ENCODE measurements at regions of chr7 and their contacts with region 1.

Region 1: DNA sequence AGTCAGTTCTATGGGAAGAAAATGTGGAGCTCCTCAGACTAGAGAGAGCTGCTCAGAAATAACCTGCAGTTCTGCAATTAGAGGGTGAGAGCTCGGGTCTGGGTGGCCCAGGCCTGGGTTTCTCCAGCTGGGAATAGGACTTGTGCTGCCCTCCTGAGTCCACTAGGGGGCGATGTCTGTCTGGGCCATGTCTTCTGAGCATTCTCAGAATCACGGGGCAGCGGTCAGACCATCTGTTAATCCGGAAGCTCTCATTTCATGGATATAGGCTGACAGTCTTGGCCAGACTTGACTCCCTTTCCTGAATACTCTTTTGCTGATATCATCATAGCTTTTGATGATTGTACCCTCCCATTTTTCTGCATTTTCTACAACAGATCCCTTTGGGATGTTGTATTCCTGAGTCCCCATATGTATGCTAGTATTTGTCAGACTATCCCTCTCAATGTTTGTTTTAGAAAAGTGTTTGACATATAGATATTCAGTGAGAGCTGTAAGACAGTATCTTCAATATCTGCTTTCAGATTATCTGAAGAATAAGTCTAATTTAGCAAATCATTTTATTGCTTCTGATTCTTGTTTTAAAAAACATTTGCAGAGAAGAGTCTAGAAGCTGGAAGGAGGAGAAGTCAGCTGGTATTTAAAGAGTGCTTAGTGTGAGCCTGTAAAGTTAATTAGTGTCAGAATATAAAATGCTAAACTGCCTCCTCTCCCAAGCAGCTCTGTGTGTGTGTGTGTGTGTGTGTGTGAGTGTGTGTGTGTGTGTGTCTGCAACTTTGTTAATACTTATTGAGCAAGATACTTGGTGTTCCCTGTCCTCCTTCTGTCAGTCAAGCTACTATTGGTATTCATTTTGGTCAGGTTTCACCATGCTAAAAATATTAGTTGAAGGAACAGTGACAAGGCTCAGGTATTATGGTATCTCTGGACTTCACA is 38.0 kb downstream of the STARD3NL start:
- DNase-seq: peak; percentile 85
- H3K4me3 Mint-ChIP-seq: no peak overlapping the region
- H3K27ac Mint-ChIP-seq: no peak overlapping the region
- H3K4me1 Mint-ChIP-seq: peaks cover 32% of the 10 kb centered on the region
- H3K27me3 Mint-ChIP-seq: no peaks in the 10 kb centered on the region

Region 2: DNA sequence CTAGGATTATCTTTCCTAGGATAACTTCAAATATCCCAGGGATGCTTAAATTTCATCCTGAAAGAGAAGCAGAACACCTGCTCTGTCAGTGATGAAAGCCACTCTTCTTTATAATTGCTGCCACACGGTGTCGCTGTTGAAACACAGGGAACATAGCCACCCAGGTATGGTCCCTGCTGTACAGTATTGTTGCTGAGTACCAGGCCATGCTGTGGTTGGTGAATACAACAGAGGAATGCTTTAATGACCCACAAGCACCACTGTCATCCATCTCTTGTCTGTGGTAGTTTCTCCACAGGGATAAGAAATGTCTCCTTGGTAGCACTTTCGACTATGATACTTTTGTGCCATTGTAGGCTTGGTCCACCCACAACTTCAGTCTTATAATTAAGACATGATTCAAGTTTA is 108.5 kb before region 1 on chr7:
- CTCF ChIA-PET with region 1: interaction called, 29 read pairs
- DNase-seq: peak; percentile 76
- H3K4me3 Mint-ChIP-seq: no peak overlapping the region
- H3K27ac Mint-ChIP-seq: no peak overlapping the region
- H3K4me1 Mint-ChIP-seq: no peaks in the 10 kb centered on the region
- H3K27me3 Mint-ChIP-seq: peaks cover 12% of the 10 kb centered on the region

Region 3: DNA sequence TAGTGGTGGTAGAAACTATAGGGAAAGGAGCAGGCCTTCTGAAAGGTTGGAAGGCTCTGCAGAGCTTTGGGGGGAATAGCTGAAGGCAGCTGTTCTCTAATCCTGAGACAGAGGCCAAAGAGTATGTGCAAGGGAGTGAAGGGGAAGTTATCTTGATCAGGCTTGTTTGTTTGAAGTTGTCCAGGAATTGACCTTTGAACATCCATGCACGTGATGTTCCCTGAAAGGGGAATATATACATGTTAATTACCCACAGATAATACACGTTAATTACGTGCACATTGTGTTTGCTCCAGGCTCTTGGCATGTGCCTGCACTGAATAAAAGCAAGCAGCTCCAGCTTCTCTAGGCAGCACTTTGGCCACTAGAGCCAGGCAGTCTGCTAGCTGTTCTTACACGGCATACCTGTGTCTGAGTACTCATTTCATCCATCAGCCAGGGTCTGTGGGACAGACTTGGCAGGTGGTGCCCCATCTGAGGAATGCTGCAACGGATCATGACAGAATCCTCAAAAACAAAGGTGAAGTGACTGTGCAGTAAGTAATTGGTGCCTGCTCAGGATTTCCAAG is 55.9 kb before region 1 on chr7:
- CTCF ChIA-PET with region 1: no interaction called
- DNase-seq: no peak
- H3K4me3 Mint-ChIP-seq: no peak overlapping the region
- H3K27ac Mint-ChIP-seq: no peak overlapping the region
- H3K4me1 Mint-ChIP-seq: no peaks in the 10 kb centered on the region
- H3K27me3 Mint-ChIP-seq: peaks cover 6% of the 10 kb centered on the region

Region 4: GRCh38 chr7:38186593-38187314 is 29.2 kb before region 1 on chr7:
- CTCF ChIA-PET with region 1: interaction called, 13 read pairs
- DNase-seq: no peak
- H3K4me3 Mint-ChIP-seq: no peak overlapping the region
- H3K27ac Mint-ChIP-seq: no peak overlapping the region
- H3K4me1 Mint-ChIP-seq: peaks cover 7% of the 10 kb centered on the region
- H3K27me3 Mint-ChIP-seq: no peaks in the 10 kb centered on the region

Region 5: GRCh38 chr7:38232502-38233366 is 16.7 kb after region 1 on chr7:
- CTCF ChIA-PET with region 1: interaction called, 16 read pairs
- DNase-seq: peak; percentile 79
- H3K4me3 Mint-ChIP-seq: peak overlapping the region; percentile 48
- H3K27ac Mint-ChIP-seq: peak overlapping the region; percentile 96
- H3K4me1 Mint-ChIP-seq: peaks cover 76% of the 10 kb centered on the region
- H3K27me3 Mint-ChIP-seq: no peaks in the 10 kb centered on the region

Region 6: GRCh38 chr7:38335492-38336147 is 119.6 kb after region 1 on chr7:
- CTCF ChIA-PET with region 1: interaction called, 182 read pairs
- DNase-seq: peak; percentile 84
- H3K4me3 Mint-ChIP-seq: no peak overlapping the region
- H3K27ac Mint-ChIP-seq: peak overlapping the region; percentile 39
- H3K4me1 Mint-ChIP-seq: peaks cover 38% of the 10 kb centered on the region
- H3K27me3 Mint-ChIP-seq: peaks cover 3% of the 10 kb centered on the region

Region 7: GRCh38 chr7:38369816-38370493 is 154.0 kb after region 1 on chr7:
- CTCF ChIA-PET with region 1: interaction called, 285 read pairs
- DNase-seq: peak; percentile 77
- H3K4me3 Mint-ChIP-seq: no peak overlapping the region
- H3K27ac Mint-ChIP-seq: peak overlapping the region; percentile 3
- H3K4me1 Mint-ChIP-seq: peaks cover 45% of the 10 kb centered on the region
- H3K27me3 Mint-ChIP-seq: no peaks in the 10 kb centered on the region